Dorsolateral prefrontal cortex (tissue), 120 donors: ENCODE measurements at regions of chr6 and their contacts with region 1.

Region 1: DNA sequence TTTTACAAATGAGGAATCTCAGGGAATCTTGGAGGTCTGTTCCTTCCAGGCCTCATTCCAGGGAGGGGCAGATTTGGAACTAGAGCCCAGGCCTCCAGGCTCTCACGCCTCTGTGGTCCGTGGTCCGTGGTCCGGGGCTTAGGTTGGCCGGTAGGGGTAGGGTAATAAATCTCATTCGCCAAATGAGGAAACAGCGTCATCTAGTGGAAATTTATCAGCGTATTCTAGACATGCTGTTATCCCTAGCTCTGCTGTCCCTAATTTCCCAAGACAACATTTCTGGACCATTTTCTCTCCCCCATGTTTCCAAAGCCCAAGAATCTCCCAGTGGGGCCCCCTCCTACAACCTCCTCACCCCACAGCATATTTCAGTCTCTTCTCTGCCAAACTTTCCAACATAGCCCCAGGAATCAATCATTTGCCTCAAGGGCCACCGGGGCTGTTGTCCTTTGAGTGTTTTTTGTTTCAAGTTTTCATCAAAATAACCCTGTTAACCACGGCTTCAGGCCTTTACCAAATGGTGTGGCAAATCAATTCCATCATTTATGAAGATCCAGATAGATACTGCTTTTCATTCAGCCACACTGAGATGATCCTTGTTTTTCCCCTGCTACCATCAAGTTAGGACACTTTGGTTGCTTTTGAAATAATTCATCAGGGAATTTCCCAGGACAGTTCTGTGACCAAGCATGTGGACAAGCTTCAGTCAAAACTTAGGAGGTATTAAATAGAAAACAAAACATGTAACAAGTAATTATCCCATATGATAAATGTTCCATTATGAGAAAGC is 126.8 kb downstream of the ALDH8A1 start:
- DNase-seq: peak in 6 of 10 donors; percentile 10 to 50 (median 46)
- H3K4me3 ChIP-seq: peak overlapping the region in 20 of 59 donors; percentile 5 to 40 (median 20)
- H3K27ac ChIP-seq: peak overlapping the region in 40 of 59 donors; percentile 1 to 81 (median 44)
- H3K27me3 ChIP-seq: no peaks in the 10 kb centered on the region
- CTCF ChIP-seq: peak; percentile 70 to 98 (median 93)

Region 2: GRCh38 chr6:134123666-134124208 is 699.4 kb before region 1 on chr6:
- intact Hi-C with region 1: loop called in 1 of 2 experiments (anchors 10 kb)
- DNase-seq: no peak
- H3K4me3 ChIP-seq: peak overlapping the region in 1 of 59 donors; percentile 13
- H3K27ac ChIP-seq: no peak overlapping the region
- H3K27me3 ChIP-seq: no peaks in the 10 kb centered on the region
- CTCF ChIP-seq: peak; percentile 62 to 92 (median 80)

Region 3: GRCh38 chr6:134174672-134175198 is 648.4 kb before region 1 on chr6:
- intact Hi-C with region 1: loop called (anchors 1 to 5 kb)
- DNase-seq: peak; percentile 93 to 98 (median 96)
- H3K4me3 ChIP-seq: peak overlapping the region; percentile 61 to 98 (median 86)
- H3K27ac ChIP-seq: peak overlapping the region; percentile 88 to 100 (median 99)
- H3K27me3 ChIP-seq: no peaks in the 10 kb centered on the region
- CTCF ChIP-seq: peak in 24 of 56 donors; percentile 6 to 45 (median 26)

Region 4: GRCh38 chr6:134464690-134465411 is 358.3 kb before region 1 on chr6:
- intact Hi-C with region 1: loop called in 1 of 2 experiments (anchors 10 kb)
- DNase-seq: no peak
- H3K4me3 ChIP-seq: peak overlapping the region in 7 of 59 donors; percentile 1 to 16 (median 13)
- H3K27ac ChIP-seq: peak overlapping the region in 27 of 59 donors; percentile 12 to 84 (median 47)
- H3K27me3 ChIP-seq: no peaks in the 10 kb centered on the region
- CTCF ChIP-seq: no peak

Region 5: DNA sequence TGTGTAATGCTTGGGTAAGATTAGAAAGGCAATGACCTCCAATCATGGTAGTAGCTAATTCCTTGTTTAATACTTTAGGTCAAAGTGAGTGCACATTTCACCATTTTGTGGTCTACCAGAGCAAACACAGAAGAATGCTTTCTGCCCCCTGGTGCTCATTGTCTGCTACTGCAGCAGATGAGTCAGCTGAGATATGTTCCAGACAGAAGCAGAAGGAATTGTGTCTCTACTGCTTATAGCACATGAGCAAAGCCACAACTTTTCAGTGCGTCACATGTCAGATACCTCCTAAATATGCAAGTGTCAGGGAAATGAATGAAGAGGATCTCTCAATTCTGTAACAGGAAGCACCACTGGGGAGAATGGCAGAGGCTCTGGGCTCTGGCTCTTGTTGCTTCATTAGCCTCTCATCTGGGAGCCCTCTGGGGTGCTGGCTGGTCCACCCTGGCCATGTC is 182.1 kb before region 1 on chr6:
- intact Hi-C with region 1: loop called in 1 of 2 experiments (anchors 5 kb)
- DNase-seq: peak; percentile 58 to 93 (median 81)
- H3K4me3 ChIP-seq: no peak overlapping the region
- H3K27ac ChIP-seq: peak overlapping the region in 58 of 59 donors; percentile 40 to 91 (median 79)
- H3K27me3 ChIP-seq: no peaks in the 10 kb centered on the region
- CTCF ChIP-seq: peak; percentile 81 to 98 (median 94)

Region 6: DNA sequence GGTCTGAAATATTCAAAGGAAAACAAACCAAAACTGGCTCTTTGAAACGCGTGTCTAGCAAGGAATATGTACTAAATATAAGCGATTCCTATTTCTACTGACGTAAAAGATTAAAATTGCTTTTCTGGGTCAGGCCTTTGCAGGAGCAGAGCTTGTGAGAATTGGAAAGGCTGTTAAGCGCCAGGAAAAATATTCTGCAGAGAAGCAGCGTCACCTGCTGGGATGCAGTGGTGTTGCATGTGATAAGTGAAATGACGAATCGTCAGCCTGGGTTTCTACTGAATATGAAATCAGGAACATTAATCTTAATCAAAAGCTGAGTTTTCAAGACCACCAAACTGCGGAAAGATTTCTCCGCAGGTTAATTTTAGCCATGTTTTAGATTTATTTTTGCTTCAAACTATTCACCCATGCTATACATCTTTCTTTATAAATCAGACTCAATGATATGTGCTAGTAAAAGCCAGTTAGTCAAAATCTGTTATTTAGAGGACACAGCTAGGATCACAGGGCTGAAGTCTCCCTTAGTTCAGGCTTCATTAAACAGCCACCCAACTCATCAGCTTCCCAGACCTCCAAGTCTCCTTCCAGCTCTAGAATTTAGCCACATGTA is 59.4 kb after region 1 on chr6:
- intact Hi-C with region 1: loop called in 1 of 2 experiments (anchors 2 kb)
- DNase-seq: peak; percentile 65 to 82 (median 74)
- H3K4me3 ChIP-seq: peak overlapping the region in 9 of 59 donors; percentile 0 to 27 (median 15)
- H3K27ac ChIP-seq: peak overlapping the region in 51 of 59 donors; percentile 15 to 88 (median 68)
- H3K27me3 ChIP-seq: no peaks in the 10 kb centered on the region
- CTCF ChIP-seq: peak; percentile 53 to 100 (median 96)